Activated CD4-positive, alpha-beta T cell treated with anti-CD3 and anti-CD28 coated beads, Interleukin-2, amount 10 ng/mL, durations not matched to agents 7 days and 5 days (primary cell): ENCODE measurements at regions of chr7 and their contacts with region 1.

Region 1: GRCh38 chr7:27905951-27906350 is 166.0 kb downstream of the TAX1BP1 start:
- DNase-seq: no peak
- H3K4me3 Mint-ChIP-seq: no peak overlapping the region
- H3K27ac Mint-ChIP-seq: no peak overlapping the region
- H3K4me1 Mint-ChIP-seq: peaks cover 10% of the 10 kb centered on the region
- H3K27me3 Mint-ChIP-seq: no peaks in the 10 kb centered on the region

Region 2: GRCh38 chr7:27921081-27921836 is 15.3 kb after region 1 on chr7:
- CTCF ChIA-PET with region 1: interaction called, 12 read pairs
- POLR2A ChIA-PET with region 1: no interaction called
- DNase-seq: peak; percentile 52
- H3K4me3 Mint-ChIP-seq: no peak overlapping the region
- H3K27ac Mint-ChIP-seq: no peak overlapping the region
- H3K4me1 Mint-ChIP-seq: peaks cover 5% of the 10 kb centered on the region
- H3K27me3 Mint-ChIP-seq: no peaks in the 10 kb centered on the region